SK-N-SH (cell line): ENCODE measurements at regions of chr7 and their contacts with region 1.

Region 1: DNA sequence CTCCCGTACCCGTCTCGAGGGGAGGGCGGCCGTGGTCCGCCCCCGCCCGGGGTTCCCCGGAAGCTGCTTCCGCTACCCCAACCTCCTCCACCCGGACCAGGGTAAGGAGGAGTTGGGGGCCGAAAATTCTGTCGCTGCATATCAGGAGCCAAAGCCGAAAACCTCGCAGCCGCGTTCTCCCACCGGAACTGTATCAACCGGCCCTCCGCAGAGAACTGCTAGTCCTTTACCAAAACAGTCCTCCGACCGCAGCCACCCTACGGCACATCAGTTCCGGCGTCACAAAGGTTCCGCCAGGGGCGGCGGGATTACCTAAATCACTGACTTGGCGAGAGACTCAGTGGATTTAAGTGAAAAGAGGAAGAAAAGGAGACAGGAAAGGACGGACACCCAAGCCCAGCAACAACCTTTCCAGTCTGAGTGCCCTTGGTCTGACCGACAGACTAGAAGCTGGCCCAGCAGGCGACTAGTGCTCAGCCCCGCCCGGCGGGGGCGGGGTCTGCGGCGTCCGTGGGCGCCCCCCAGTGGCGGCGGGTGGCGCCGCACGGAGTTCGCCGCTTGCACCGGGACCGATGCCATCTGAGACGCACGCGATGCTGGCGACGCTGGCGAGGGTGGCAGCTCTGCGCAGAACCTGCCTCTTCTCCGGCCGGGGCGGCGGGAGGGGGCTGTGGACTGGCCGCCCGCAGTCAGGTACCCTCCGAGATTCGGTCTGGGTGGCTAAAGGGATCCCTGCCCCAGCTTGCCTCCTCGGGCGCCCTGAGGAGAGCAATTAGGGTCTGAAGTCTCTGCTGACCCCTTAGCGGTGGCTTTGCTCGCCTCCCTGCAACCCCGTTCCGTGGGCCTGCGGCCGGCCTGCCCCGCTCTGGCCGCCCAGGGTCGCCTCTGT is at the starts of genes MPLKIP and SUGCT:
- DNase-seq: peak; percentile 99
- H3K4me3 ChIP-seq: peak within 1 kb of the TSS; percentile 81 to 98
- H3K27ac ChIP-seq: peak within 1 kb of the TSS; percentile 91 to 95
- H3K4me1 ChIP-seq: peaks cover 8 to 9% of the 10 kb centered on the region in 2 experiments; a peak in 2 of 4 replicates
- H3K27me3 ChIP-seq: no peaks in the 10 kb centered on the region
- CTCF ChIP-seq: peak; percentile 99
- EP300 ChIP-seq: peak; percentile 20 to 21; a peak in 2 of 4 replicates
- RAD21 ChIP-seq: peak; percentile 49
- polyA plus RNA-seq, gene MPLKIP: 48.4 and 64.0 TPM in 2 replicates
- polyA plus RNA-seq, gene SUGCT: 41.4 and 53.7 TPM in 2 replicates

Region 2: DNA sequence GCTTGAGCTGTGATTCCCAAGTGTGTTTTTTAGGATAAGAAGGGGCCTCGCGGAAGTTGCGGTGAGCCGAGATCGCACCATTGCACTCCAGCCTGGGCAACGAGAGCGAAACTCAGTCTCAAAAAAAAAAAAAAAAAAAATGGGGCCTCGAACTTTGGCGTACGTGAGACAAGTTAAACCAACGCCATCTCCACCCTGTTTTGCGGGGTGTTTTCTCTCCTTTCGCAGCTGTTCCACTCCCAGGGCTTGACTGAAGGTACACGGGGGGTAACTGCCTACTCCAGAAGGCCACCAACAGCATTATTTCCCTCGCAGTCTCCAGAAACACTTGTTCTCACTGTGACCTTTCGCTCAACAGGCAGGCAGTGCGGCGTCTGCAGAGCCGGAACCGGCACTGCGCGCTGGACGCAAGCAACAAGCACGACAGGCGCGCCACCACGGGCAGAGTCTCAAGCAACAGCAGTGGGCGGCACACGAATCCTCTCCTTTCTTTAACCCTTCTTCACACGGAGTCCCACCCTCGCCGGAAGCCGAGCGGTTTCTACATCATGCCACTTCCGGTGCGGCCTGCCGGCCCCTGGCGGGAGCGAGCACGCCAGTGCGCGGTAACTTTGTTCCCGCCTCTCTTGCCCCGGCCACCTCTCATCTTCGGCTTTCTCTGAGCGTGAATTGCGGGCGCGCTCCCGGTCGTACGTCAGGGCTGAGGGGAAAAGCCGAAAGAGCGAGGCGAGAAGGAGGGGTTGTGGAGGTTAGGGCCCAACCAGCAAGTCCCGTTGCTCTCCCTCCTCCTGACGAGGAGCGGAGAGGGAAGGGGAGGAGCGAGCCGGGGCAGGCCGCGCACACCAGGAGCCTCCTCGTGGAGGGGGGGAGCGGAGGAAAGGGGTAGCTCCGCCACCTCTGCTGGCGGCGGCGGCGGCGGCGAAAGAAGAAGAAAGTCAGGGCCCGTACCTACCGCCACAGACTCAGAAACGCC is 185.4 kb before region 1 on chr7:
- CTCF ChIA-PET with region 1: interaction called, 16 read pairs
- POLR2A ChIA-PET with region 1: interaction called, 5 read pairs
- DNase-seq: peak; percentile 97
- H3K4me3 ChIP-seq: peak overlapping the region; percentile 96 to 97
- H3K27ac ChIP-seq: peak overlapping the region; percentile 97
- H3K4me1 ChIP-seq: peaks cover 0 to 20% of the 10 kb centered on the region in 2 experiments; a peak in 2 of 4 replicates
- H3K27me3 ChIP-seq: no peaks in the 10 kb centered on the region
- CTCF ChIP-seq: no peak
- EP300 ChIP-seq: no peak
- RAD21 ChIP-seq: peak; percentile 18; the same call in 1 of the 2 replicates

Region 3: DNA sequence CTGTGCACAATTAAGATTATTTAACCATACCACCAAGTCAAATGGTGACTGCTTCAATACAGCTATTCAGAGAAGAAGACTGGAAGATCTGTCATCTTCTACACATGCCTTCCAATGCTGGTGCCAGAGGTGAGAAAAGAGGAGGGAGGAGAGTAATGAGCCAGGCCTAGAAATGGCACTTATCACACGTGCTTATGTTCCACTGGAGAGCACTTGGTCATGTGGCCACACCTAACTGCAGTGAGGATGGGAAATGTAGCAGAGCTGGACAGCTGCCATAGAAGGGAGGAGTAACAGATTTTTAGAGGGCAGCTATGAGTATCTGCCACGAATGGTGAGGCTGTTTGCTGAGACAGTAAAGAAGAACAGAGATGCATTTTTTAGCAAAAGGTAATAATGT is 77.4 kb before region 1 on chr7:
- CTCF ChIA-PET with region 1: interaction called, 16 read pairs
- POLR2A ChIA-PET with region 1: no interaction called
- DNase-seq: no peak
- H3K4me3 ChIP-seq: no peak overlapping the region
- H3K27ac ChIP-seq: no peak overlapping the region
- H3K4me1 ChIP-seq: peaks cover 0 to 3% of the 10 kb centered on the region in 2 experiments; a peak in 1 of 4 replicates
- H3K27me3 ChIP-seq: no peaks in the 10 kb centered on the region
- CTCF ChIP-seq: no peak
- EP300 ChIP-seq: no peak
- RAD21 ChIP-seq: no peak

Region 4: GRCh38 chr7:40093631-40094350 is 40.9 kb before region 1 on chr7:
- CTCF ChIA-PET with region 1: interaction called, 18 read pairs
- POLR2A ChIA-PET with region 1: no interaction called
- DNase-seq: no peak
- H3K4me3 ChIP-seq: no peak overlapping the region
- H3K27ac ChIP-seq: no peak overlapping the region; a peak in 1 of 4 replicates
- H3K4me1 ChIP-seq: peaks cover 0 to 12% of the 10 kb centered on the region in 2 experiments; a peak in 2 of 4 replicates
- H3K27me3 ChIP-seq: no peaks in the 10 kb centered on the region
- CTCF ChIP-seq: no peak
- EP300 ChIP-seq: no peak
- RAD21 ChIP-seq: no peak

Region 5: GRCh38 chr7:40120020-40120419 is 14.7 kb before region 1 on chr7:
- CTCF ChIA-PET with region 1: interaction called, 38 read pairs
- POLR2A ChIA-PET with region 1: interaction called, 3 read pairs
- DNase-seq: no peak
- H3K4me3 ChIP-seq: no peak overlapping the region
- H3K27ac ChIP-seq: no peak overlapping the region
- H3K4me1 ChIP-seq: no peaks in the 10 kb centered on the region
- H3K27me3 ChIP-seq: no peaks in the 10 kb centered on the region
- CTCF ChIP-seq: no peak
- EP300 ChIP-seq: no peak
- RAD21 ChIP-seq: no peak

Region 6: GRCh38 chr7:40147371-40148246 is 12.9 kb after region 1 on chr7:
- CTCF ChIA-PET with region 1: interaction called, 32 read pairs
- POLR2A ChIA-PET with region 1: interaction called, 5 read pairs
- DNase-seq: no peak
- H3K4me3 ChIP-seq: no peak overlapping the region
- H3K27ac ChIP-seq: no peak overlapping the region
- H3K4me1 ChIP-seq: no peaks in the 10 kb centered on the region
- H3K27me3 ChIP-seq: no peaks in the 10 kb centered on the region
- CTCF ChIP-seq: peak; percentile 24
- EP300 ChIP-seq: no peak
- RAD21 ChIP-seq: no peak

Region 7: GRCh38 chr7:40165216-40165615 is 30.5 kb after region 1 on chr7:
- CTCF ChIA-PET with region 1: interaction called, 25 read pairs
- POLR2A ChIA-PET with region 1: no interaction called
- DNase-seq: peak; percentile 44
- H3K4me3 ChIP-seq: no peak overlapping the region
- H3K27ac ChIP-seq: no peak overlapping the region
- H3K4me1 ChIP-seq: peaks cover 0 to 3% of the 10 kb centered on the region in 2 experiments; a peak in 1 of 4 replicates
- H3K27me3 ChIP-seq: no peaks in the 10 kb centered on the region
- CTCF ChIP-seq: no peak
- EP300 ChIP-seq: no peak
- RAD21 ChIP-seq: no peak

Region 8: GRCh38 chr7:40405991-40406390 is 271.3 kb after region 1 on chr7:
- CTCF ChIA-PET with region 1: no interaction called
- POLR2A ChIA-PET with region 1: no interaction called
- DNase-seq: no peak
- H3K4me3 ChIP-seq: no peak overlapping the region
- H3K27ac ChIP-seq: no peak overlapping the region
- H3K4me1 ChIP-seq: no peaks in the 10 kb centered on the region
- H3K27me3 ChIP-seq: no peaks in the 10 kb centered on the region
- CTCF ChIP-seq: no peak
- EP300 ChIP-seq: no peak
- RAD21 ChIP-seq: no peak